ENCODE measurements at regions of chr3 and their contacts with region 1.

Region 1: GRCh38 chr3:192917404-192918274 is at the start of gene MB21D2:
- DNase-seq: peak; percentile 71
- ATAC-seq: peak; percentile 85
- H3K4me3 Mint-ChIP-seq: peak within 1 kb of the TSS; percentile 93
- H3K27ac Mint-ChIP-seq: peak within 1 kb of the TSS; percentile 88
- H3K4me1 Mint-ChIP-seq: peaks cover 16% of the 10 kb centered on the region
- H3K27me3 Mint-ChIP-seq: peaks cover 44% of the 10 kb centered on the region
- total RNA-seq, gene MB21D2: 4.3 to 5.3 TPM

Region 2: DNA sequence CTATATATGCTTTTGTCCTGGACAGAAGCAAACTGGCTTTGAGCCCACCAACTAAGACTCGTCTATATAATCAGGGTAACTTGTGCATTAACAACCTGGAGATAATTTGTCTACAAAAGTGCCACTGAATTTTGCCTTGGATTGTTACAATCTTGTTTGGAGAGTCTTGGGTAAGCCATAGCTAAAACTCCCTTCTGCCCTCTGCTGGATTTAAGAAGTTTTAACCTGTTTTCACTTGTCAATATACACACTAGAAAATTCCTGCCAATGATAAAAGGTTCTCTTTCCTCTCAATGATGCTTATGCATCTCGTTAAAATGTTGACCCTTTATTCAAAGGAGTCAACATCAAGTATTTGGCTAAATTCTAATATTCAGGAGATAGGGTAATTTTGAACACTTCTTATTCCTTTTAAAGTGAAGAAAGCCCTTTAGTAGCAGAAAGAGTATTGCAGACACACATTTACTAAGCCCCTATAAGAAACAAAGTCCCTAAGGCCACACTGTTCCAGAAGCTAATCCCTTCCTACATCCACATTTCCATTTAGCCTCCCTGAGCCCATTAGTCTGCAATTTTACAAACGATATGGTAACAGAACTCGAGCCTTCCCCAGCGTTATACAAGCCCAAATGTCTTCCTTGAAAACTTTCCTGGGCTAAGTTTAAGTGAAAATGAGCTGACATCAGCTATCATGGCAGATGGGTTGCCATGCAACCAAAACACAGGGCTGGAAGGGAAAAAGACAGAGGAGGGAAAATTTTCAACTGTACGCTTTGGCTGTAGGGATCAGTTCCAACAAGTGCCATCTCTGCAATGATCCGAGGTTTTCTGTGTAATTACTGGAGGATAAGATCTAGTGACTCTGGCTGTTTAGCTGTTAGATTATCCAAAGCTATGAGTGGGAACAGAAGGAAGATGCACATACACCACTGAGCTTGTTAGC is 114.4 kb before region 1 on chr3:
- POLR2A ChIA-PET with region 1: no interaction called
- DNase-seq: no peak
- ATAC-seq: no peak
- H3K4me3 Mint-ChIP-seq: no peak overlapping the region
- H3K27ac Mint-ChIP-seq: no peak overlapping the region
- H3K4me1 Mint-ChIP-seq: no peaks in the 10 kb centered on the region
- H3K27me3 Mint-ChIP-seq: no peaks in the 10 kb centered on the region

Region 3: GRCh38 chr3:192892981-192893700 is 24.5 kb before region 1 on chr3:
- POLR2A ChIA-PET with region 1: interaction called, 11 read pairs
- DNase-seq: peak; percentile 60
- ATAC-seq: peak; percentile 95
- H3K4me3 Mint-ChIP-seq: peak overlapping the region; percentile 72
- H3K27ac Mint-ChIP-seq: peak overlapping the region; percentile 86
- H3K4me1 Mint-ChIP-seq: peaks cover 55% of the 10 kb centered on the region
- H3K27me3 Mint-ChIP-seq: peaks cover 12% of the 10 kb centered on the region

Region 4: DNA sequence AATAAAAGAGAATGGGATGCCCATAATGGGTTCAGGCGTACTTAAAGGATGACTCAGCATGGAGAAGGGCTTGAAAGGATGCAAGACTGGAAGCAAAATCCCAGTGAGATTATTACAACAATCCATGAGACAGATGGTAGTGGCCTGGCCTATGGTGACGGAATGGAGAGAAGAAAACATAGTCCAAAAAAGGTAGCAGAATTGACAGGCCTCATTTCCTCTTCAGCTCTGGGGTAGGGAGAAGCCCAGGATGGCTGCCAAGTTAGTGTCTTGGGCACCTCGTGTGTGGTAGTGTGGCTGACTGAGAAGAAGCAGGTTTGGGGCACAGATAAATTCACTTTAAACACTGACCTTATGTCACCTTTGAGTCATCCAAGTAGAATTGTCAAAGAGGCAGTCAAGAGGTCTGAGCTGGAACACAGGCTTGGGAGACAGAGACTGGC is 18.1 kb before region 1 on chr3:
- POLR2A ChIA-PET with region 1: interaction called, 11 read pairs
- DNase-seq: no peak
- ATAC-seq: no peak
- H3K4me3 Mint-ChIP-seq: peak overlapping the region; percentile 49
- H3K27ac Mint-ChIP-seq: peak overlapping the region; percentile 78
- H3K4me1 Mint-ChIP-seq: peaks cover 43% of the 10 kb centered on the region
- H3K27me3 Mint-ChIP-seq: peaks cover 10% of the 10 kb centered on the region

Measured in activated naive CD8-positive, alpha-beta T cell treated with anti-CD3 and anti-CD28 coated beads, Interleukin-2, amount 10 ng/mL, durations not matched to agents 7 days and 5 days (primary cell).